ENCODE measurements at regions of chr7 and their contacts with region 1.

Region 1: DNA sequence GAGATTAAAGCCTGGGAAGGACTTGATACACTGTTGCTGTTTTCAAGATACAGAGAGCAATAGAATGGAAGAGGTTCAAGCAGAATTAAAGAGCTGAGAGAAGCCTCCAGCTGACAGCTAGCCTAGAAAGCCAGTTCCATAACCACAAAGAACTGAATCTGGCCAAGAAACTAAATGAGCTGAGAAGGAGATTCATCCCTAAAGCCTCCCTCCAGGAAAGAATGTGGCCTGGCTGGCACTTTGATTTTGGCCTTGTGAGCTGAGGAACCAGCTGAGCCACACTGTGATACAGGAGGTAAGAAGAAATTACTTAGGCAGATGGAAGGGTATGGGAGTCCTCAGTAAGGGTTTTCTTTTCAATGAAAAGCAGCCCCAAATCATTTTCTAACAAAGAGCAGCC is 324.1 kb downstream of the PHF14 start:
- DNase-seq: no peak
- ATAC-seq: no peak
- H3K4me3 ChIP-seq: no peak overlapping the region
- H3K27ac ChIP-seq: no peak overlapping the region
- H3K4me1 ChIP-seq: no peaks in the 10 kb centered on the region
- H3K27me3 ChIP-seq: no peaks in the 10 kb centered on the region

Region 2: DNA sequence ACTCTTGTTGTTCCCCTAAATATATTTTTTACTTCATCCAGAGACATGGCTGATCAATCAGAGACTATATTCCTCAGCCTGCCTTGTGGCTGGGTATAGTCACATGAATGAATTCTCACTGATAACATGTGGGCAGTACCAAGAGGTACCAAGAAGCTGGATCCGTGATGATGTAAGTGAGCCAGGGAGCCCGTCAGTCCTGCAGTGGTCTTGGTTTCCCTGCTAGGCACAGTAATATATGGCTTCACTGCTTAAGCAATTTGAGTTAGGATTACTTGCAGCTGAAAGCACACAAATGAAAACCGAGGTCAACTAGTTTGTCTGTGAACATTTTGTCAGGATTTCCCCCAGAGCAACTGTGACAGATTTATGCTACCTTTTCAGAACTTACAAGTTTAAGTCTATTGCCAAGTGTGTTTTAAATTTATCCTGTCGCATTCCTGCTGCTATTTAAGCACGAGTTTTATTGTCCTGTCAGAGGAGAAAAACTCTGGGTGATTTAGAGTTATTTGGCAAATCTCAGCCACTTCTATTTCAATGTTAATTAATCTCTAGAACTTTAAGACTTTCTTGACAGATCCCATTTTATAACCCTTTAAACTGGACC is 57.7 kb after region 1 on chr7:
- intact Hi-C with region 1: loop called in 1 of 2 experiments (anchors 10 kb)
- DNase-seq: no peak
- ATAC-seq: no peak
- H3K4me3 ChIP-seq: no peak overlapping the region
- H3K27ac ChIP-seq: no peak overlapping the region
- H3K4me1 ChIP-seq: no peaks in the 10 kb centered on the region
- H3K27me3 ChIP-seq: no peaks in the 10 kb centered on the region

Region 3: GRCh38 chr7:11416641-11417458 is 119.1 kb after region 1 on chr7:
- intact Hi-C with region 1: no loop called
- DNase-seq: no peak
- ATAC-seq: no peak
- H3K4me3 ChIP-seq: no peak overlapping the region
- H3K27ac ChIP-seq: no peak overlapping the region
- H3K4me1 ChIP-seq: no peaks in the 10 kb centered on the region
- H3K27me3 ChIP-seq: peaks cover 0 to 1% of the 10 kb centered on the region in 2 donors

Measured in aorta (tissue), 5 donors.